IMR-90 (cell line): ENCODE measurements at regions of chr15 and their contacts with region 1.

Region 1: DNA sequence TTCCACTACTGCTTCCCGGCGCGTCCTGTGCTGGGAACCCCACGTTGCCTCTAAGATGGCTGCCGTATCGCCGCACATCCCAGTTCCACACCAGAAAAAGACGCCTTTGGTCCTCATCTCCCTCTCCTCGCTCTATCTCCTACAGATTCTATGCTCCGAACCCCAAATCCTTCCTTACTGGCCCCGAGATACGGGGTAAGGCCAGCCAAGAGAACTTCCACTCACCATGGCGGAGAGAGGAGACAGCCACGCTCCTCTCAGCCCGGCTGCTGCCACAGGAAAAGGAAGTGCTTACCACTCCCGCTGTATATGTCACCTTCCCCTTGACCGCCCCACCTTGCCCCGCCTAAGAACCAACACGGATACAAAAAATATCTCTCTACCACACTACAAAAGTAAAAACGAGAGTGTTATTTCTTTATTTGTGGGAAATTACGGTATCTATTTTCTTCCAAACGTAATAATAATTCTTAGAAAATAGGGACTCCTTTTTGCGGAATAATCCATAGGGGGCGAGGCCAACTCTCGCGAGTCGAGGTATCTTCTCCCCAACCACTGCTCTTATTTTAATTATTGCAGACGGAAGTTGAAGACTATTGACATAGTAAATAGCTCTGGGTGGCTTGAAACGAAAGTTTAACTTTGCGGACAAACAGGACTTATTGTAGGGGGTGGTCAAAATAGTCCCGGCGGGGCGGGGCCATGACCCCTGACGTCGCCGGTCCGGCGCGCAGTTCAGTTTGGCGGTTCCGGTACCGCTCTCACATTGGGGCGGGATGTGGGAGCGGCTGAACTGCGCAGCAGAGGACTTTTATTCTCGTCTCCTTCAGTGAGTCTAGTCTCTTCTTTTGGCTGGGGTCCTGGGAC is at the starts of genes RPL4 and ZWILCH:
- DNase-seq: peak; percentile 87
- ATAC-seq: peak; percentile 87
- H3K4me3 ChIP-seq: peak within 1 kb of the TSS; percentile 59
- H3K27ac ChIP-seq: peak within 1 kb of the TSS; percentile 95
- H3K4me1 ChIP-seq: peaks cover 1% of the 10 kb centered on the region; the same call in 1 of the 2 replicates
- H3K27me3 ChIP-seq: no peaks in the 10 kb centered on the region
- CTCF ChIP-seq: no peak
- POLR2A ChIP-seq: peak; percentile 98
- RAD21 ChIP-seq: no peak
- total RNA-seq, gene RPL4: 6,510 and 13,244 TPM in 2 replicates
- total RNA-seq, gene ZWILCH: 22.2 and 28.1 TPM in 2 replicates

Region 2: GRCh38 chr15:66459818-66460615 is 44.8 kb before region 1 on chr15:
- CTCF ChIA-PET with region 1: no interaction called
- POLR2A ChIA-PET with region 1: interaction called, 10 read pairs
- dilution Hi-C with region 1: no loop called
- in situ Hi-C with region 1: no loop called
- intact Hi-C with region 1: no loop called
- DNase-seq: peak; percentile 77
- ATAC-seq: peak; percentile 89
- H3K4me3 ChIP-seq: no peak overlapping the region
- H3K27ac ChIP-seq: no peak overlapping the region
- H3K4me1 ChIP-seq: peaks cover 6% of the 10 kb centered on the region
- H3K27me3 ChIP-seq: no peaks in the 10 kb centered on the region
- CTCF ChIP-seq: no peak
- POLR2A ChIP-seq: no peak
- RAD21 ChIP-seq: no peak

Region 3: GRCh38 chr15:66489179-66489791 is 15.5 kb before region 1 on chr15:
- CTCF ChIA-PET with region 1: no interaction called
- POLR2A ChIA-PET with region 1: no interaction called
- dilution Hi-C with region 1: no loop called
- in situ Hi-C with region 1: no loop called
- intact Hi-C with region 1: no loop called
- DNase-seq: no peak
- ATAC-seq: peak; percentile 59
- H3K4me3 ChIP-seq: no peak overlapping the region
- H3K27ac ChIP-seq: no peak overlapping the region
- H3K4me1 ChIP-seq: no peaks in the 10 kb centered on the region; the same call in 1 of the 2 replicates
- H3K27me3 ChIP-seq: no peaks in the 10 kb centered on the region
- CTCF ChIP-seq: no peak
- POLR2A ChIP-seq: no peak
- RAD21 ChIP-seq: no peak

Region 4: GRCh38 chr15:66566963-66567531 is 62.3 kb after region 1 on chr15:
- CTCF ChIA-PET with region 1: no interaction called
- POLR2A ChIA-PET with region 1: no interaction called
- dilution Hi-C with region 1: no loop called
- in situ Hi-C with region 1: no loop called
- intact Hi-C with region 1: loop called (anchors 1 kb)
- DNase-seq: peak; percentile 76
- ATAC-seq: peak; percentile 74
- H3K4me3 ChIP-seq: no peak overlapping the region
- H3K27ac ChIP-seq: 0 out of 2 replicates have a peak overlapping the region, but pooled peaks have one; percentile 7
- H3K4me1 ChIP-seq: peaks cover 11% of the 10 kb centered on the region
- H3K27me3 ChIP-seq: no peaks in the 10 kb centered on the region
- CTCF ChIP-seq: peak; percentile 62
- POLR2A ChIP-seq: no peak
- RAD21 ChIP-seq: peak; percentile 54

Region 5: DNA sequence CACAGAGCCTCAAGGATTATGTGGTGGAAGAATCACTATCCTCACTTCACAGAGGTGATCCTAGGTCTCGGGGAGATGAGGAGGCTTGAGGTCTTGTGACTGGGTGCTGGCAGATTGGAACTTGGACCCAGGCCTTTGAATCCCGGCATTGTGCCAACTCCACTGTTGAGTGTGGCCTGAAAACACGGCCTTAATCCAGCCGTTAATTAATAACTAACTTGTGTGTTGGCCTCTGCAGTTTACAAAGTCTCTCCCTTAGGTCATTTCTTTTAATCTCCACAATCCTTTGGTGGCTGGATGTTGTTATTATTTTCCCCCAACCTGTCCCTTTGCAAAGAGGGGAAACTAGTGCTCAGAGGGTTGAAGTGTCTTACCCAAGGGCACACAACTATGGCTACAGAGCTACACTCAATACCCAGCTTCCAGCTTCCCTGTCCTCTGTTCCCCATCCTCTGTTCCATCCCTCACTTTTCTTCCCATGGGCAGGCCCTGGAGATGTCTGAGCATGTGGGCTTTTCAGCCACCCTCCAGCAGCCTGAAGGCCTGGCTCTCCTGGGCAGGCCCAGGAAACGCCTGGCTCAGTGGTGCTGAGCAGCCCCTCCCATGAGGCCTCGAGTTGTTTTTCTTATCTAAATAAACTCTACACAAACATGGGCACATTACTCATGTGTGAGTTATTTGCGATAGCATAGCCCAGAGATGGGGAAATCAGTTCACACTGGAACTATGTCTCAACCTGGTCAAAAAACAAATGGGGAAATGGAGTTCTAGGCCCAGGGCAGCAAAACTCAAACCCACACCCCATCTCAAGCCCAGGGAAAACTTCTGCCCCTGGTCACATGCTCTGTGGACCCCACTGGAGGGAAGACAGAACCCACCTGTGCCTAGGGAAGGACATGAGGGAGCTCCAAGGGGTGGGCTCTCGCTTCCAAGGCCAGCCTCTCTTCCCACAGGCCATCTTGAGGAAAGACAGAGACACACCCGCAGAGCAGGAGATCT is 543.8 kb after region 1 on chr15:
- CTCF ChIA-PET with region 1: no interaction called
- POLR2A ChIA-PET with region 1: no interaction called
- dilution Hi-C with region 1: no loop called
- in situ Hi-C with region 1: no loop called
- intact Hi-C with region 1: loop called (anchors 5 kb)
- DNase-seq: peak; percentile 96
- ATAC-seq: peak; percentile 82
- H3K4me3 ChIP-seq: no peak overlapping the region
- H3K27ac ChIP-seq: peak overlapping the region; percentile 99
- H3K4me1 ChIP-seq: peaks cover 36% of the 10 kb centered on the region
- H3K27me3 ChIP-seq: no peaks in the 10 kb centered on the region
- CTCF ChIP-seq: no peak
- POLR2A ChIP-seq: 0 out of 2 replicates have a peak, but pooled peaks have one; percentile 27
- RAD21 ChIP-seq: no peak; the same call in none of the 2 replicates